ENCODE measurements at regions of chr6 and their contacts with region 1.

Region 1: GRCh38 chr6:34526992-34527728 is 29.0 kb downstream of the SPDEF start:
- DNase-seq: peak; percentile 98
- ATAC-seq: peak; percentile 100
- H3K4me3 Mint-ChIP-seq: no peak overlapping the region
- H3K27ac Mint-ChIP-seq: no peak overlapping the region
- H3K4me1 Mint-ChIP-seq: peaks cover 3% of the 10 kb centered on the region
- H3K27me3 Mint-ChIP-seq: no peaks in the 10 kb centered on the region

Region 2: DNA sequence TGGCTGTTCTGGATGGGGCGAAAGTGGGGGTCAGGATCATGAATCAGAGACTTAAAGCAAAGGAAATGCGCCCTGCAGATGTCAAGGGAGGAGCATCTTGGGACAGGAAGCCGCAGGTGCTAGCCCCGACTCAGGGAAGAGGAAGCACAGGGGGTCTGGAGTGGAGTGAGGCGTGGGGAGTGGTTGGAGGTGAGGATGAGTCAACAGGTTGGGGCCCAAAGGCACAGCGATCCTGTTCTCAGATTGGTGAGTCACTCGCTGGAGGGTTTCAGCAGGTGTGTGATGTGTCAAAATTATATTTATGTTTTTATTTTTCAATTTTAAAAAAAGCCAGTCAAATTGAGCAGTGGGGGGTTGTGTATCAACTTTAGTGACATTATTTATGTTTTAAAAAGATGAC is 42.3 kb before region 1 on chr6:
- CTCF ChIA-PET with region 1: no interaction called
- POLR2A ChIA-PET with region 1: no interaction called
- intact Hi-C with region 1: loop called in 1 of 2 experiments (anchors 1 kb)
- DNase-seq: peak; percentile 90
- ATAC-seq: peak; percentile 98
- H3K4me3 Mint-ChIP-seq: peak overlapping the region; percentile 24
- H3K27ac Mint-ChIP-seq: peak overlapping the region; percentile 87
- H3K4me1 Mint-ChIP-seq: peaks cover 27% of the 10 kb centered on the region
- H3K27me3 Mint-ChIP-seq: no peaks in the 10 kb centered on the region

Region 3: GRCh38 chr6:35496841-35497570 is 969.8 kb after region 1 on chr6 and contains the start of gene TEAD3:
- CTCF ChIA-PET with region 1: no interaction called
- POLR2A ChIA-PET with region 1: no interaction called
- intact Hi-C with region 1: loop called in 1 of 2 experiments (anchors 1 kb)
- DNase-seq: peak; percentile 70
- ATAC-seq: peak; percentile 65
- H3K4me3 Mint-ChIP-seq: peak within 1 kb of the TSS; percentile 69
- H3K27ac Mint-ChIP-seq: peak within 1 kb of the TSS; percentile 28
- H3K4me1 Mint-ChIP-seq: peaks cover 4% of the 10 kb centered on the region
- H3K27me3 Mint-ChIP-seq: peaks cover 7% of the 10 kb centered on the region
- total RNA-seq, gene TEAD3: 1.4 to 1.5 TPM